ENCODE measurements at regions of chr3 and their contacts with region 1.

Region 1: GRCh38 chr3:33798411-33799201 is at the start of gene PDCD6IP:
- DNase-seq: peak; percentile 86 to 99 (median 93)

Region 2: DNA sequence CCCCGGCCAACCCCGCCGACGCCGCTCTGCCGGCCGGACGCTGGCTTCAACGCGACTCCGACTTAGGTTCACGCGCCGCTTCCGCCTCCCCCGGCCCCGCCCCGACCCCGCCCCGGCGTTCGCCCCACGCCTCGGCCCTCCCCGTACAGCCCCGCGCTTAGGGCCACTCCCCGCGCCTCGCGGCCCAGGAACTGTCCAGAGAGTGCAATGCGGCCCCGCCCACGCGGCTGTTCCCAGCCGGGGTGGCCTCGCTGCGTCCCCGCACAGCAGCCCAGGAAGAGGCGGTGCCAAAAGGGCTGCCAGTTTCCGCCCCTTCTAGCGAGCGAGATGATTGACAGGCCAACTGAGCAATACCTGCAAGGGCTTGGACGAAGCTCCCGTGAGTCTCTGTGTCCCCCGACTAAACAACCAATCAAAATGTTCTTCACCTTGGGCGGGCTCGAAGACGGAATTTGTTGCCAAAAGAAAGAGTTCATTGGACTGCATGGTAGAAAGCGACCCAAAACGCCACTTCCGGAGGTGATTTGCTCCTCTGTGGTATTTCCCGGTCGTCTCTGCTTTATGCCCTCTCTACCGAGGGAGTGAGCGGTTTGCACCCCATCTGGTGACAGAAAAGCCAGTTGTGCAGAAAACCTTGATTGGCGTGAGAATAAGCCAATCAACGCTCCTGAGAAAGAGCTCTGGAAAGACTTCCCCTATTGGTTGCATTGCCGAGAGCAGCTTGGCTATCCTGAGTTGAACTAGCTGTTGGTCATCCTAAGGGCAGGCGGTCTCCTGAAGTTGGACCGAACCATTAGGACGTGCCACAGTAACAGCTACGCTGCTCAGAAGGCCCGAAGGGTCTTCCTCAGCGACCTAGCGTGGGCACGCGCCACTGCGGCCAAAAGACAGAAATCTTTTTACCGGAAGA is 358.0 kb before region 1 on chr3 and contains the start of gene UBP1:
- intact Hi-C with region 1: loop called (anchors 2 kb)
- DNase-seq: peak; percentile 97 to 100 (median 99)

Measured in posterior cingulate gyrus (tissue), 11 donors.